Activated B cell treated with CpG ODN at 0.5 μM for 24 hours (primary cell): ENCODE measurements at regions of chr5 and their contacts with region 1.

Region 1: GRCh38 chr5:150449517-150450339 is at the start of gene RPS14:
- DNase-seq: peak; percentile 91
- ATAC-seq: peak; percentile 93
- H3K4me3 Mint-ChIP-seq: peak within 1 kb of the TSS; percentile 100
- H3K27ac Mint-ChIP-seq: peak within 1 kb of the TSS; percentile 100
- H3K4me1 Mint-ChIP-seq: peaks cover 43% of the 10 kb centered on the region
- H3K27me3 Mint-ChIP-seq: no peaks in the 10 kb centered on the region
- CTCF ChIP-seq: peak; percentile 53
- total RNA-seq, gene RPS14: 4,086 and 4,865 TPM in 2 replicates

Region 2: GRCh38 chr5:150357326-150358260 is 92.1 kb before region 1 on chr5 and contains the start of gene TCOF1:
- CTCF ChIA-PET with region 1: no interaction called
- POLR2A ChIA-PET with region 1: interaction called, 11 read pairs
- intact Hi-C with region 1: loop called (anchors 1 kb)
- DNase-seq: peak; percentile 98
- ATAC-seq: peak; percentile 97
- H3K4me3 Mint-ChIP-seq: peak within 1 kb of the TSS; percentile 89
- H3K27ac Mint-ChIP-seq: peak within 1 kb of the TSS; percentile 93
- H3K4me1 Mint-ChIP-seq: peaks cover 49% of the 10 kb centered on the region
- H3K27me3 Mint-ChIP-seq: no peaks in the 10 kb centered on the region
- CTCF ChIP-seq: no peak
- total RNA-seq, gene TCOF1: 74.7 and 76.1 TPM in 2 replicates

Region 3: DNA sequence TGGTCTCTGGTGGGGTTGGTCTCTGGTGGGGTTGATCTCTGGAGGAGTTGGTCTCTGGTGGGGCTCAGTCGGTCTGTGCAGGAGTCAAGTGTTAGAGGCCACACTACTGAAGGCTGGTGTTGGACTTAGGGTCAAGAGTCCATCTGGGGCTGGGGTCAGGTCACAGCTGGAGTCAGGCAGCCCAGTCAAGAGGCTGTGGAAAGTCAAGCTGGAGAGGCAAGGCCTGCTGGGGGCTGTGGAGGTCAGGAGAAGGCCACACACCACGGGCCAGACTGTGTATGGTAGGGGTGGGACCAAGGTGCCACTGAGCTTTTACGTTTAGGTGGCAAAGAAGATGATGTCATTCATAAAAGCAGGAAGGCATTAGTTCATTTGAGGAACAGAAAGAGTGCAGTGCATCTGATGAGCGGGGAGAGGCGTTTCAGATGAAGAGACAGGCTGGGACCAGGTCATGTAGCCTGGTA is 20.3 kb before region 1 on chr5:
- CTCF ChIA-PET with region 1: interaction called, 3 read pairs
- POLR2A ChIA-PET with region 1: interaction called, 12 read pairs
- intact Hi-C with region 1: no loop called
- DNase-seq: no peak
- ATAC-seq: peak; percentile 97
- H3K4me3 Mint-ChIP-seq: peak overlapping the region; percentile 53
- H3K27ac Mint-ChIP-seq: peak overlapping the region; percentile 94
- H3K4me1 Mint-ChIP-seq: peaks cover 67% of the 10 kb centered on the region
- H3K27me3 Mint-ChIP-seq: no peaks in the 10 kb centered on the region
- CTCF ChIP-seq: no peak

Region 4: GRCh38 chr5:150486402-150487198 is 36.9 kb after region 1 on chr5:
- CTCF ChIA-PET with region 1: no interaction called
- POLR2A ChIA-PET with region 1: interaction called, 23 read pairs
- intact Hi-C with region 1: loop called (anchors 5 kb)
- DNase-seq: peak; percentile 76
- ATAC-seq: peak; percentile 38
- H3K4me3 Mint-ChIP-seq: peak overlapping the region; percentile 79
- H3K27ac Mint-ChIP-seq: peak overlapping the region; percentile 85
- H3K4me1 Mint-ChIP-seq: peaks cover 53% of the 10 kb centered on the region
- H3K27me3 Mint-ChIP-seq: no peaks in the 10 kb centered on the region
- CTCF ChIP-seq: no peak

Region 5: DNA sequence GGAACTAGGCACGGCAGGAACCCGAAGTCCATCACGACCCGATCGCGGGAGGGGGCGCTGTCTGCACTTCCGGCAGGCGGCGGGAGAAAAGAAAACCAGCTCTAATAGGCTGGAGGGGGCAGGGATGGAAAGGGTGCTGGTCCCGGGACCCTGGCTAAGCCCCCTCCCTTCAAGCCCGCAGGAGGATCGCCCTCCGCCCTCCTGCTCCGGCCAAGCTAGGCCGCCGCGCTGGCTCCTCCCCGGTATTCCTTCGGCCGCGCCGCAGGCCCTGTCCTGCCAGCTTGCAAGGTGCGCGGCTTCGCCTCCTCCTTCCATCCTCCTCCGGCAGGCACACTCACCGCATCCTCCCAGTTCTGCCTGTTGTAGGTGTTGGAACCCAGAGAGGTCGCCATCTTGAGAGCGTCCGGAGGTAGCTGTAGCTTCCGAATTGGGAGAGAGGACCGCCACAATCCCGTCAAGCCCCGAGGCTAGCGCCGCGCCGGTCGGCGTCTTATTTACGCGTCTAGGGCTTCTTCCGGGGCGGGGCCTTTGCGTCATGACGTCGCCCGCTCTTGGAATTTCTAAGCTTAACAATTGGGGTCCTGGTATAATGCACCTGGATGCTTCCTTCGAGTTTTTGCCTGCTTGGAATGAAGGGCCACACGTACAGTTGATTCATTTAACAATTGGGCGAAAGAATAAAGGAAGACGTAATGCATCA is 251.0 kb after region 1 on chr5 and contains the start of gene RBM22:
- CTCF ChIA-PET with region 1: no interaction called
- POLR2A ChIA-PET with region 1: interaction called, 25 read pairs
- intact Hi-C with region 1: loop called (anchors 1 kb)
- DNase-seq: peak; percentile 84
- ATAC-seq: peak; percentile 95
- H3K4me3 Mint-ChIP-seq: no peak within 1 kb of the TSS
- H3K27ac Mint-ChIP-seq: no peak within 1 kb of the TSS
- H3K4me1 Mint-ChIP-seq: peaks cover 6% of the 10 kb centered on the region
- H3K27me3 Mint-ChIP-seq: no peaks in the 10 kb centered on the region
- CTCF ChIP-seq: no peak
- total RNA-seq, gene RBM22: 74.0 and 74.1 TPM in 2 replicates

Region 6: DNA sequence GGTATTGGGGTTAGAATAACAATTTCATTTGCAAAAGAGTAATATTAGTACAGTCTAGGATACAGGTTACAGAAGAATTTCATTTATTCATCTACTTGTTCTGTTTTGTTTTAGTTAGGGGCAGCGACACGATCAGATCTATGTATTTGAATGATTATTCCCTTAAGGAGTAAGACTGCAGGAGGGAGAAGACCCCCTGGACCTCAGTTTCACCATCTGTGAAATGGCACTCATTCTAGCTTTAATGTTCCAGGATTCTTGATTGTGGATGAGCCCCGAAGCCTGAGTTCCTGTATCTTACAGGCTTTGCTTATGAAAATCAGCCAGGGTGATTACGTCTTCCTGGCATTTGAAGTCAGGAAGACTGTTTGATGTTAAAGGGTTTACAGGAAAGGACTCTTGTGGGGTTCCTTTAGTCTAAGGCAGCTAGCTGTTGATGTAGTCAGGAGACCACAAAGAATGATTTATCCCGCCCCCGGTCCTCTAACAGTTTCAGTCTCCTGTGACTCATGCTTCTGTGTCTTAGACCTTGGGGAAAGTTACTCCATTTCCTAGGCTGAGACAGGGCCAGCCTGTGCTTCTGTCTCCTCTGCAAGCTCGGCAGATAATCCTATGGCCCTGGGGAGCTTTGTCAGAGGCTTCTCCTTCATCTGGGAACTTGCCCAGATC is 340.3 kb after region 1 on chr5:
- CTCF ChIA-PET with region 1: no interaction called
- POLR2A ChIA-PET with region 1: no interaction called
- intact Hi-C with region 1: no loop called
- DNase-seq: no peak
- ATAC-seq: peak; percentile 54
- H3K4me3 Mint-ChIP-seq: no peak overlapping the region
- H3K27ac Mint-ChIP-seq: peak overlapping the region; percentile 24
- H3K4me1 Mint-ChIP-seq: peaks cover 7% of the 10 kb centered on the region
- H3K27me3 Mint-ChIP-seq: peaks cover 38% of the 10 kb centered on the region
- CTCF ChIP-seq: no peak